Activated T-helper 2 cell treated with anti-CD3 and anti-CD28 coated beads, Interferon-gamma antibody, Interleukin-2, Interleukin-4, amounts not matched to agents 10 μg/mL and 5 μg/mL and 100 μg/mL, durations not matched to agents 14 hours and 24 hours and 36 hours (primary cell): ENCODE measurements at regions of chr19 and their contacts with region 1.

Region 1: DNA sequence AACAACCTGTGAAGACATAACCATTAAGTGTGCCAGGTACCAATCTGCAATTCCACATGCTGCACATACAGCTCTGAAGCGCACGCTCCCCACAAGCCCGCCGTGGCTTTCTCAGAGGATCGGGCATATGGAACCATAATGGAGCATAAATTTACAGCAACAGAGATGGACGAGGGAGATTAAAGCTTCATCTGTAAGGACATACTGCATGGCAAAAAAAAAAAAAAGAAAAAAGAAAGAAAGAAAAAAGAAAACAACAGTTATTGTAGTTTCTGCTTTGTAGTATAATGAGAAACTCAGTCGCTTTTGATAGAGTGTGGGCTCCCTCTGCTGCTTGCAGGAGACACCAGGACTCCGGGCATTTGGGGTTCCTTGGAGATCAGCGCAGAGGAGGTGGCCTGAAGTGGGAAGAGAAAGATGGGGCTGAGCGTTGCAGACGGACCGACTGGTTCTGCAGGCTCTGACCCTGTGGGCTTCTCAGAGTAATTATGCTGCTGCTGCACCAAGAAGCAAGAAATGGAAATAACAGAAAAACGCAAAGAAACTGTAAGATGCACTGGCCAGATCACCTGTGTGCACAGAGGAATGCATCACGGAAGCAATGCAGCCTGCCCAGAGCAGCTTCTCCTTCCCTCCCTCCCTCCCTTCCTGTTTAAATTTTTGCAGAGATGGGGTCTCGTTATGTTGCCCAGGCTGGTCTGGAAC is 10.8 kb upstream of the PDCD5 start:
- DNase-seq: peak; percentile 20
- H3K4me3 Mint-ChIP-seq: no peak overlapping the region
- H3K27ac Mint-ChIP-seq: no peak overlapping the region
- H3K4me1 Mint-ChIP-seq: peaks cover 9% of the 10 kb centered on the region
- H3K27me3 Mint-ChIP-seq: peaks cover 10% of the 10 kb centered on the region

Region 2: DNA sequence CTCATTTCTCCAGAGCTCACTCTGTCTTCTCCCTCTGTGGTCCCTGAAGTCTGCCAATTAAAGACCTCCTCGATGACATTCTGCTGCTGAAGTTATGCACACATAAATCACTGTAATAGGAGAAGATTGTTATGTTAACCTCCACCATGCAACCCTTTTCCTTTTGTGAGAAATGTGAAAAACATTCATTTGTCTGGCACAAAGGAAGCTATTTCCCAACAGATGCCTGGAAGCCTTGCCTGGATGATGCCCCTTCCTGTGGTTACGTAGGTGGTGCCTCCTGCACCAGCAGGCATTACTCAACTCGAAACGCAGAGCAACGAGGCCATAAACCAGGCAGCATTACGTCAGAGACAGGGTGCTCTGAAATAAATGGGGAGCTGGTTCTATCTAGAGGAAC is 552.2 kb before region 1 on chr19:
- intact Hi-C with region 1: no loop called
- DNase-seq: no peak
- H3K4me3 Mint-ChIP-seq: no peak overlapping the region
- H3K27ac Mint-ChIP-seq: no peak overlapping the region
- H3K4me1 Mint-ChIP-seq: no peaks in the 10 kb centered on the region
- H3K27me3 Mint-ChIP-seq: no peaks in the 10 kb centered on the region

Region 3: GRCh38 chr19:32339988-32340874 is 230.0 kb before region 1 on chr19:
- intact Hi-C with region 1: loop called (anchors 1 kb)
- DNase-seq: peak; percentile 16
- H3K4me3 Mint-ChIP-seq: no peak overlapping the region
- H3K27ac Mint-ChIP-seq: no peak overlapping the region
- H3K4me1 Mint-ChIP-seq: no peaks in the 10 kb centered on the region
- H3K27me3 Mint-ChIP-seq: peaks cover 5% of the 10 kb centered on the region

Region 4: DNA sequence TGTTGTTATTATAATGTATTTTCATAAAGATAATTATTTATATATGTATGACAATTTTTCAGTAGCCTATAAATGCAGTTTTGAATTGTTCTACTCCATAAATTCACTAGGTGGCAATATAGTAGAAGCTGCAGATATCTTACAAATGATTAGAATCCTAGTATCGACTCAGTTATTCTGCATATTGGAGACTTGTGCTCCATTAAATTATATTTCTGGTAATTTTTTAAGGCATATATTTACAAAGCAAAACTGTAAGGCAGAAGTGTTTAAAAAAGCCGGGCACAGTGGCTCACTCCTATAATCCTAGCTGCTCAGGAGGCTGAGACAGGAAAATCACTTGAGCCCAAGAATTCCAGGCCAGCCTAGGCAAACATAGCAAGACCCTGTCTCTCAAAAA is 106.0 kb before region 1 on chr19:
- intact Hi-C with region 1: loop called (anchors 2 kb)
- DNase-seq: no peak
- H3K4me3 Mint-ChIP-seq: no peak overlapping the region
- H3K27ac Mint-ChIP-seq: no peak overlapping the region
- H3K4me1 Mint-ChIP-seq: peaks cover 8% of the 10 kb centered on the region
- H3K27me3 Mint-ChIP-seq: no peaks in the 10 kb centered on the region